ENCODE measurements at regions of chr4 and their contacts with region 1.

Region 1: DNA sequence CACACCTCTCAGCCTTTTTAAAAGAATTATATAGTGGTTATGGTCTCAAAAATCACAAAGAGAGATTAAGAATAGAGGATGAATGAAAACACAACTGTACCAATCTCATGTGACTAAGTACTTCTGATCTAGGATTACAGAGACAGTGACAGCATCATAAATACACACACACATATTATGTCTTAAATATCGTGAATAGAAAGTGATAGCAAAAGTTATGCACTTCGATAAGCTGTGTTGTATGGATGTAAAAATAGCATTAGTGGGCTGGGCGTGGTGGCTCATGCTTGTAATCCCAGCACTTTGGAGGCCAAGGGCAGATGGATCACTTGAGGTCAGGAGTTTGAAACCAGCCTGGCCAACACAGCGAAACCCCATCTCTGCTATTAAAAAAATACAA is 25.0 kb downstream of the GYPA start:
- DNase-seq: no peak
- H3K4me3 ChIP-seq: no peak overlapping the region
- H3K27ac ChIP-seq: no peak overlapping the region
- H3K4me1 ChIP-seq: no peaks in the 10 kb centered on the region
- H3K27me3 ChIP-seq: no peaks in the 10 kb centered on the region
- CTCF ChIP-seq: no peak

Region 2: GRCh38 chr4:143882892-143883291 is 232.6 kb before region 1 on chr4:
- CTCF ChIA-PET with region 1: no interaction called
- POLR2A ChIA-PET with region 1: no interaction called
- intact Hi-C with region 1: loop called (anchors 5 kb)
- DNase-seq: no peak
- H3K4me3 ChIP-seq: no peak overlapping the region
- H3K27ac ChIP-seq: no peak overlapping the region
- H3K4me1 ChIP-seq: no peaks in the 10 kb centered on the region
- H3K27me3 ChIP-seq: no peaks in the 10 kb centered on the region
- CTCF ChIP-seq: no peak

Measured in PC-9 (cell line).